T-cell (primary cell): ENCODE measurements at regions of chr22 and their contacts with region 1.

Region 1: DNA sequence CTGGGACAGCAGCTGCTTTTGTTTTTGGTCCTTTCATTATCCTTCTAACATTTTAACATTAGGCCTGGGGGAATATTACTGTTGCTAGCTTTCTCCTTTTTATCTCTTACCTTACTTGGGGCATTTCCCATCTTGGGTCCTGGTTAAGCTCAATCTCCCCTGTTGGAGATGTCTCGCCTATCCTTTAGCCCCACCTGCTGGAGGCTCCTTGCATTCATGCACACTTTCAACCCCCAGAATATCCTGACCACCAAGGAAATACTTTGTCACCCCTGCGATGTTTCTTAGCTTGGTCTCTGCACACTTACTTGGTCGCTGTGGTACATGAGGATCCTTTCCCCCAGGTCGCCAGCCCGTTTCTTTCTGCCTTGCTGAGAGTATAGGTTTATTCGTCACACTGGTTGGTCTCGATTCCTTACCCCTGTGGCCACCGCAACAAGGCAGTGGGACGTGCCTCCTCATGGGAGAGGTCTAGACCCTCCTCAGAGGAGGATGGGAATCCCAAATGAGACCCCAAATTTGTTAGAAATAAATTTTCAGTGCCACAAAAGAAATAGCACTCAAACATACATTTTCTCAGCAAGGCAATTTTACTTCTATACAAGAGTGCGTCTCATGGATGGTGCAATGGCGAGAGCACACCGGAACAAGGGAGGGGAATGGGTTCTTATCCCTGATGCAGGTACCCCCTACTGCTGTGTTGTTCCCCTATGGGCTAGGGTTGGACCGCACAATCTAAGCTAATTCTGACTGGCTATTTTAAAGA is 5.4 kb upstream of the TXN2 start:
- DNase-seq: peak; percentile 14 to 83 (median 59)
- ATAC-seq: no peak
- H3K4me3 ChIP-seq: no peak overlapping the region
- H3K4me3 Mint-ChIP-seq: no peak overlapping the region
- H3K27ac ChIP-seq: no peak overlapping the region
- H3K27ac Mint-ChIP-seq: no peak overlapping the region
- H3K4me1 ChIP-seq: peaks cover 3 to 9% of the 10 kb centered on the region in 2 experiments
- H3K4me1 Mint-ChIP-seq: peaks cover 2 to 12% (median 9%) of the 10 kb centered on the region in 3 donors
- H3K27me3 ChIP-seq: no peaks in the 10 kb centered on the region
- H3K27me3 Mint-ChIP-seq: no peaks in the 10 kb centered on the region

Region 2: DNA sequence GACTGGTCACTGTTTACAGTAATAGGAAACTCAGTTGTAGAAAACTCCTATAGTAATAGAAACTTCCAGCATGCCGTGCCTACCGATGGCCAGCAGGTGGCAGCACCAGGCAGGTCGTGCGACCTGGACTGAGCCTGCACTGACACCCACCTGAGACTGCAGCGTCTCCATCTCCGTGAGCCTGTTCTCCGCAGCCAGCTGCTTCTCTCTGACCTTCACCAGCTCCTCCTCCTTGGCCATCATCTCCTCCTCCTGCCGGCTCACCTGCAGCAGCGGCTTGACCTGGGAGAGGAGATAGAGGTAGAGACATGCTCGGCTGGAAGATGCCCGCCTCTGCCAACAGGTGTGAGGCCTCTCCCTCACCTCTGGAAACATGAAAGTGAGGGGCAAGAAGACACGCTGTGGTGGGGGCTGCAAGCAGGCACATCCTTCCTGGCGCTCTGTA is 185.4 kb before region 1 on chr22:
- CTCF ChIA-PET with region 1: interaction called, 6 to 12 read pairs
- POLR2A ChIA-PET with region 1: interaction called in 1 of 2 experiments, 7 read pairs
- DNase-seq: peak; percentile 56 to 90 (median 80)
- ATAC-seq: peak; percentile 77 to 86 (median 82)
- H3K4me3 ChIP-seq: no peak overlapping the region
- H3K4me3 Mint-ChIP-seq: no peak overlapping the region
- H3K27ac ChIP-seq: peak overlapping the region; percentile 20
- H3K27ac Mint-ChIP-seq: peak overlapping the region; percentile 16 to 68
- H3K4me1 ChIP-seq: peaks cover 0 to 22% of the 10 kb centered on the region in 2 experiments
- H3K4me1 Mint-ChIP-seq: peaks cover 11 to 15% (median 12%) of the 10 kb centered on the region in 3 donors
- H3K27me3 ChIP-seq: no peaks in the 10 kb centered on the region
- H3K27me3 Mint-ChIP-seq: no peaks in the 10 kb centered on the region

Region 3: GRCh38 chr22:36461669-36462649 is 24.8 kb before region 1 on chr22:
- CTCF ChIA-PET with region 1: no interaction called
- POLR2A ChIA-PET with region 1: no interaction called
- DNase-seq: no peak
- ATAC-seq: no peak
- H3K4me3 ChIP-seq: no peak overlapping the region
- H3K4me3 Mint-ChIP-seq: no peak overlapping the region
- H3K27ac ChIP-seq: no peak overlapping the region
- H3K27ac Mint-ChIP-seq: no peak overlapping the region
- H3K4me1 ChIP-seq: peaks cover 4 to 9% of the 10 kb centered on the region in 2 experiments
- H3K4me1 Mint-ChIP-seq: peaks cover 6 to 10% (median 9%) of the 10 kb centered on the region in 3 donors
- H3K27me3 ChIP-seq: peaks cover 0 to 2% of the 10 kb centered on the region in 2 experiments
- H3K27me3 Mint-ChIP-seq: no peaks in the 10 kb centered on the region